T-cell (primary cell): ENCODE measurements at regions of chr17 and their contacts with region 1.

Region 1: GRCh38 chr17:49556223-49556971 is 19.3 kb upstream of the NXPH3 start:
- DNase-seq: peak; percentile 59 to 88 (median 78)
- ATAC-seq: peak; percentile 92 to 98 (median 96)
- H3K4me3 ChIP-seq: no peak overlapping the region
- H3K4me3 Mint-ChIP-seq: no peak overlapping the region
- H3K27ac ChIP-seq: no peak overlapping the region
- H3K27ac Mint-ChIP-seq: no peak overlapping the region
- H3K4me1 ChIP-seq: peaks cover 0 to 10% of the 10 kb centered on the region in 2 experiments
- H3K4me1 Mint-ChIP-seq: peaks cover 0 to 8% (median 5%) of the 10 kb centered on the region in 3 donors
- H3K27me3 ChIP-seq: peaks cover 0 to 22% of the 10 kb centered on the region in 2 experiments
- H3K27me3 Mint-ChIP-seq: peaks cover 4 to 5% of the 10 kb centered on the region in 2 donors

Region 2: GRCh38 chr17:49407981-49408501 is 148.4 kb before region 1 on chr17:
- CTCF ChIA-PET with region 1: interaction called, 10 to 19 read pairs
- POLR2A ChIA-PET with region 1: interaction called in 1 of 2 experiments, 3 read pairs
- DNase-seq: peak; percentile 62 to 89 (median 79)
- ATAC-seq: peak; percentile 94 to 99 (median 96)
- H3K4me3 ChIP-seq: no peak overlapping the region
- H3K4me3 Mint-ChIP-seq: no peak overlapping the region
- H3K27ac ChIP-seq: no peak overlapping the region
- H3K27ac Mint-ChIP-seq: peak overlapping the region in 1 of 2 donors; percentile 61
- H3K4me1 ChIP-seq: peaks cover 3 to 35% of the 10 kb centered on the region in 2 experiments
- H3K4me1 Mint-ChIP-seq: peaks cover 32 to 38% (median 36%) of the 10 kb centered on the region in 3 donors
- H3K27me3 ChIP-seq: no peaks in the 10 kb centered on the region
- H3K27me3 Mint-ChIP-seq: no peaks in the 10 kb centered on the region

Region 3: GRCh38 chr17:49567871-49568694 is 11.7 kb after region 1 on chr17:
- CTCF ChIA-PET with region 1: interaction called, 5 to 11 read pairs
- POLR2A ChIA-PET with region 1: no interaction called
- DNase-seq: peak; percentile 32 to 84 (median 72)
- ATAC-seq: peak; percentile 48 to 55 (median 52)
- H3K4me3 ChIP-seq: peak overlapping the region; percentile 12 to 48
- H3K4me3 Mint-ChIP-seq: peak overlapping the region; percentile 49 to 69 (median 67)
- H3K27ac ChIP-seq: no peak overlapping the region
- H3K27ac Mint-ChIP-seq: peak overlapping the region in 1 of 2 donors; percentile 11
- H3K4me1 ChIP-seq: peaks cover 0 to 29% of the 10 kb centered on the region in 2 experiments
- H3K4me1 Mint-ChIP-seq: peaks cover 13 to 17% (median 16%) of the 10 kb centered on the region in 3 donors
- H3K27me3 ChIP-seq: peaks cover 0 to 46% of the 10 kb centered on the region in 2 experiments
- H3K27me3 Mint-ChIP-seq: peaks cover 4 to 26% of the 10 kb centered on the region in 2 donors

Region 4: GRCh38 chr17:49585422-49586027 is 29.1 kb after region 1 on chr17:
- CTCF ChIA-PET with region 1: no interaction called
- POLR2A ChIA-PET with region 1: no interaction called
- DNase-seq: no peak
- ATAC-seq: no peak
- H3K4me3 ChIP-seq: no peak overlapping the region
- H3K4me3 Mint-ChIP-seq: no peak overlapping the region
- H3K27ac ChIP-seq: no peak overlapping the region
- H3K27ac Mint-ChIP-seq: no peak overlapping the region
- H3K4me1 ChIP-seq: no peaks in the 10 kb centered on the region
- H3K4me1 Mint-ChIP-seq: peaks cover 0 to 6% (median 1%) of the 10 kb centered on the region in 3 donors
- H3K27me3 ChIP-seq: peaks cover 0 to 5% of the 10 kb centered on the region in 2 experiments
- H3K27me3 Mint-ChIP-seq: no peaks in the 10 kb centered on the region